Pancreas (tissue), 10 donors: ENCODE measurements at regions of chr6 and their contacts with region 1.

Region 1: GRCh38 chr6:34610819-34611477 is 54.8 kb upstream of the SPDEF start:
- DNase-seq: peak in 1 of 6 donors; percentile 25
- ATAC-seq: peak; percentile 60 to 76 (median 69)
- H3K4me3 ChIP-seq: no peak overlapping the region
- H3K27ac ChIP-seq: no peak overlapping the region
- H3K4me1 ChIP-seq: peaks cover 3 to 13% (median 8%) of the 10 kb centered on the region in 3 donors
- H3K27me3 ChIP-seq: no peaks in the 10 kb centered on the region
- CTCF ChIP-seq: no peak

Region 2: GRCh38 chr6:34459899-34460593 is 150.9 kb before region 1 on chr6:
- intact Hi-C with region 1: loop called in 2 of 3 experiments (anchors 5 to 10 kb)
- DNase-seq: peak in 3 of 6 donors; percentile 20 to 54 (median 40)
- ATAC-seq: peak; percentile 80 to 97 (median 90)
- H3K4me3 ChIP-seq: no peak overlapping the region
- H3K27ac ChIP-seq: no peak overlapping the region
- H3K4me1 ChIP-seq: no peaks in the 10 kb centered on the region
- H3K27me3 ChIP-seq: no peaks in the 10 kb centered on the region
- CTCF ChIP-seq: peak; percentile 12 to 62 (median 54)

Region 3: DNA sequence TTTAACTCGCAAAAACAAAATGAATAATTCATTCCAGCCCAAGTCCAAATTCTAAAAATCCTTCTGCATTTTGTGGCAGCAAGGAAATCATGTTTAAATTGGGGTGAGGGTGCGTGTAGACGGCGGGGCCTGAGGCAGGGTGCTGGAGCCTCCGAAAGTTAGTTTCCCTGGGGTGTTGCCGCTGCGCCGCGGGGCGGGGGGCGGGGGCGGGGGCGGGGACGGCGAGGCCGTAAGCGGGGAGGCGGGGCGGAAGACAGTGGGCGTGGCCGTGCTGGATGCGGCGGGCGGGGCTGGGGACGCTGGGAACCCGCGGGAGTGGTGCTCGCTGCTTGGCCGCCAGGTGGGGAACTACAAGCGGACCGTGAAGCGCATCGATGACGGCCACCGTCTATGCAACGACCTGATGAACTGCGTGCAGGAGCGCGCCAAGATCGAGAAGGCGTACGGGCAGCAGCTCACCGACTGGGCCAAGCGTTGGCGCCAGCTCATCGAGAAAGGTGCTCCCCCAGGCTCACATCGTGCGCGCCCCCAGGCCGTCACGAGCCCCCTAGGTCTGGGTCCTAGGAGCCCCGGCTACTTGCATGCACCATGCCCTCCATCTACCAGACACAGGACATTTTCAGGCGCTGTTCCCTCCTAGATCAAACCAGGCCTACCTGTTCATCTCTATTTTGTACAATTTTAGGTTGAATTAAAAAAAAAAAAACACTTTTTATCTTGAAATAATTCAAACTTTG is 83.8 kb before region 1 on chr6:
- intact Hi-C with region 1: loop called in 1 of 3 experiments (anchors 5 kb)
- DNase-seq: peak; percentile 91 to 99 (median 96)
- ATAC-seq: peak; percentile 98 to 99 (median 98)
- H3K4me3 ChIP-seq: peak overlapping the region in 2 of 4 donors; percentile 19 to 20
- H3K27ac ChIP-seq: no peak overlapping the region
- H3K4me1 ChIP-seq: peaks cover 0 to 4% (median 0%) of the 10 kb centered on the region in 3 donors
- H3K27me3 ChIP-seq: no peaks in the 10 kb centered on the region
- CTCF ChIP-seq: peak; percentile 62 to 75 (median 69)

Region 4: GRCh38 chr6:34697544-34697836 is 86.5 kb after region 1 on chr6:
- intact Hi-C with region 1: no loop called
- DNase-seq: no peak
- ATAC-seq: peak in 1 of 4 donors; percentile 0
- H3K4me3 ChIP-seq: peak overlapping the region in 3 of 4 donors; percentile 85 to 92 (median 92)
- H3K27ac ChIP-seq: peak overlapping the region in 1 of 4 donors; percentile 93
- H3K4me1 ChIP-seq: peaks cover 9 to 19% (median 15%) of the 10 kb centered on the region in 3 donors
- H3K27me3 ChIP-seq: no peaks in the 10 kb centered on the region
- CTCF ChIP-seq: no peak

Region 5: DNA sequence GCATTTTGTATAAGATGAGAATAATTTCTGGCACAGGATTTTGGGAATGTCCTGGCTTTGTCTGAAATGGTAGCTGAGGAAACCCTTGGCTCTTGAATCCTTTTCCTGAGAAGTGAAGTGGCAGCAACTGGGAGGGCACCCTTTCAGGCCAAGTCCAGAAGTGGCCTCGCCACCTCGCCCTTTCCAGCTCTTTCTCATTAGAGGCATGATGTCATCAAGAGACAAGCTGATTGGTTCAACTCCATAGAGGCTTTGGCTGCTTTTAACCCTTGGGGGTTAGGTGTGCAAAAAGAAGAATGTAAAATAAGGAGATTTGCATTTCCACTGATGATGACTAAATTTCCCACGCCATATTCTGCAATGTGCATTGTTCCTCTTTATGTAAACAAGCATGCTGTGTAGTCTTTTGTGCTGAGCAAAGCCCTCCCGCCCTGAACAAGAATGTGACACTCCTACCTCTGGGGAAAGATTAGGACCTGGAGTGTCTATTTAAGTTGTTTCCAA is 413.7 kb after region 1 on chr6:
- intact Hi-C with region 1: no loop called
- DNase-seq: peak in 2 of 6 donors; percentile 33 to 35
- ATAC-seq: peak; percentile 71 to 85 (median 84)
- H3K4me3 ChIP-seq: no peak overlapping the region
- H3K27ac ChIP-seq: no peak overlapping the region
- H3K4me1 ChIP-seq: peaks cover 0 to 5% (median 0%) of the 10 kb centered on the region in 3 donors
- H3K27me3 ChIP-seq: no peaks in the 10 kb centered on the region
- CTCF ChIP-seq: no peak